Endothelial cell of umbilical vein (primary cell): ENCODE measurements at regions of chrX and their contacts with region 1.

Region 1: GRCh38 chrX:11412715-11413623 is 119.8 kb downstream of the AMELX start:
- DNase-seq: peak; percentile 71
- H3K4me3 ChIP-seq: no peak overlapping the region
- H3K27ac ChIP-seq: peak overlapping the region; percentile 24
- H3K4me1 ChIP-seq: peaks cover 11% of the 10 kb centered on the region
- H3K27me3 ChIP-seq: no peaks in the 10 kb centered on the region
- CTCF ChIP-seq: no peak
- POLR2A ChIP-seq: no peak

Region 2: DNA sequence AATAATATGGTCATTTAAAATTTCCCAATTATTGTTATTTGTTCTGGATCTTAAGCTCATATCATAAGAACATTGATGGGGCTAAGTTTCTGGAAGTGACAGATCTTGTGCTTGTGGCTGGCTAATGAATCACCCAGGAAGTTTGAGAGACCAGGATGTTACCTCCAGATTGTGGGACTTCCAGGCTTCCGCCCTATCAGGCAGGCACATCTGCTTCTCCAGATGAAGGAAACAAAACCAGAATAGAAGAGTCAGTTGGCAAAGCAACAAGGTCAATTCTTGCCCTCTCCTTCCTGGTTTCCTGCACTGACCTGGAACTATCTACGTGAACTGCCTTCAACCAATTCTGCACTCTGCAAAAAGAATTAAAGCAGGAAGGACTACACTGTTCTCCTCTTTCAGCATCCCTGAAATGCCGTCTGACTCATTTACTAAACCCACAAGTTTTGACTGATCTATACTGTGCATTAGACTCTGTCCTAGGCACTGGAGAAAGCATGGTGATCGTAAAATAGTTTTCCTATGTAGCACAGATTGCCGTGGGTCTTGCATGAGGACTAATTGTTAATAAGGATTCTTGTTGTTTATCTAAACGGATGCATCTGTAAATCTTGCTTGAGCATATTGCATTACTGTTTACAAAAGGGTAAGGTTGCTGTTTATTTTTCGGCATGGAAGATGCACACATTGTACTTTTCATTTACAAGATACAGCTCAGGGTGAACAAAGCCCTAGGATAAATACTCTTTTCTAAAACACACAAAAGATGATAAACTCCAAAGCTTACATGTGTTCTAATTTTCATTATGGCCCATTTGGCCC is 45.1 kb before region 1 on chrX:
- CTCF ChIA-PET with region 1: no interaction called
- POLR2A ChIA-PET with region 1: no interaction called
- dilution Hi-C with region 1: no loop called
- intact Hi-C with region 1: loop called (anchors 1 kb)
- DNase-seq: peak; percentile 55
- H3K4me3 ChIP-seq: no peak overlapping the region
- H3K27ac ChIP-seq: peak overlapping the region; percentile 47
- H3K4me1 ChIP-seq: peaks cover 14% of the 10 kb centered on the region
- H3K27me3 ChIP-seq: no peaks in the 10 kb centered on the region
- CTCF ChIP-seq: no peak
- POLR2A ChIP-seq: no peak